HCT116 (cell line): ENCODE measurements at regions of chr1 and their contacts with region 1.

Region 1: DNA sequence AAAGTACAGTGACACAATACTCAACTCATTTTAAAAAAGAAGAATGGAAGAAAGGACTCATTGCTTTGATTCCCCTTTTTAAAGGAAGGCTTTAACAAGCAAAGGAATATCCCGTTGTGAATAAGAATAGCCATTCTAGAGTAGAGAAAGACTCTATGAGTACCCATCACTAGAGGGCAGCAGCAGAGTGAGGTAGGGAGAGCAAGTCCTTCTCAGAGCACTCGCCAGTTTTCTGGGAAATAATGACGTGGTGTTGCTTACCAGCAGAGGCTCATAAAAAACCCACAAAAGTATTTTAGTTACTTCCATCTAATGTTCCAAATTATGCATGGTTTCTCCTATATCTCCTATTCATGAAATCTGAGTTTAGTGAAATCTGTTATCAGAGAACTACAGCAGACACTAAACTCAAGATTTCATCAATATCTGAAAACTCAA is 74.6 kb downstream of the USP24 start:
- DNase-seq: peak; percentile 54
- ATAC-seq: peak; percentile 89
- H3K4me3 ChIP-seq: no peak overlapping the region
- H3K27ac ChIP-seq: no peak overlapping the region
- H3K4me1 ChIP-seq: no peaks in the 10 kb centered on the region
- H3K27me3 ChIP-seq: no peaks in the 10 kb centered on the region
- CTCF ChIP-seq: peak; percentile 74 to 85 (median 81)
- POLR2A ChIP-seq: no peak
- RAD21 ChIP-seq: peak; percentile 81

Region 2: DNA sequence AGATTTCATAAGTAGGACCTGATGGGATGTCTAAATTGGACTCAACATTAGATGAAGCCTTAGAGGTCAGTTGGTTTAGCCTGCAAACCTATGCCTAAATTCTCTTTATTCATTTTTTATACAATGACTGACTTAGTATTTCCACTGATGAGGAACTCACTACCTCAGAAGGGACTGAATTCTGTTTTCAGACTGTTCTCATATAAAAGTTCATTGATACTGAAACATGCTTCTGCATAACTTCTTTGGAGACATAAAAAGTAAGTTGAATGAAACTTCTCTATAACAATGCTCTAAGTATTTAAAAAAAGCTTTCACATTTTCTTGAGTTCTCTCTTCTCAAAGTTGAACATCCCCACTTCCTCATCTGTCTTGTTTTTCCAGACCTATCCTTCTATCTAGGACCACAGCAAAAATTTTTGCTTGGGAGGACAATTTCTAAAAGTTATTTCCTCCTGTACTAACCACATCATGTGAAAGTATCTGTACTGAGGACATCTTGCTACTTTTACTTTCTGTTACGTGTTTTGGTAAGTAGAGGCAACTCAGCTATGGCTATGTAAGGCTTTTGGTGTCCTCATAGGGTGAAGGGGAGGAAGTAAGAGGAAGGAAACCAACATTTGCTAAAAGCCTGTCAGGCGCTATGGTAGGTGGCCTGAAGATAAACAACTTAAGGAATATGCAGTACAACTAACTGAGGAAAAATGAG is 10.5 kb after region 1 on chr1:
- CTCF ChIA-PET with region 1: interaction called, 20 read pairs
- POLR2A ChIA-PET with region 1: no interaction called
- RAD21 ChIA-PET with region 1: no interaction called
- intact Hi-C with region 1: no loop called
- DNase-seq: no peak
- ATAC-seq: no peak
- H3K4me3 ChIP-seq: no peak overlapping the region
- H3K27ac ChIP-seq: no peak overlapping the region
- H3K4me1 ChIP-seq: no peaks in the 10 kb centered on the region
- H3K27me3 ChIP-seq: no peaks in the 10 kb centered on the region
- CTCF ChIP-seq: no peak
- POLR2A ChIP-seq: no peak
- RAD21 ChIP-seq: no peak

Region 3: DNA sequence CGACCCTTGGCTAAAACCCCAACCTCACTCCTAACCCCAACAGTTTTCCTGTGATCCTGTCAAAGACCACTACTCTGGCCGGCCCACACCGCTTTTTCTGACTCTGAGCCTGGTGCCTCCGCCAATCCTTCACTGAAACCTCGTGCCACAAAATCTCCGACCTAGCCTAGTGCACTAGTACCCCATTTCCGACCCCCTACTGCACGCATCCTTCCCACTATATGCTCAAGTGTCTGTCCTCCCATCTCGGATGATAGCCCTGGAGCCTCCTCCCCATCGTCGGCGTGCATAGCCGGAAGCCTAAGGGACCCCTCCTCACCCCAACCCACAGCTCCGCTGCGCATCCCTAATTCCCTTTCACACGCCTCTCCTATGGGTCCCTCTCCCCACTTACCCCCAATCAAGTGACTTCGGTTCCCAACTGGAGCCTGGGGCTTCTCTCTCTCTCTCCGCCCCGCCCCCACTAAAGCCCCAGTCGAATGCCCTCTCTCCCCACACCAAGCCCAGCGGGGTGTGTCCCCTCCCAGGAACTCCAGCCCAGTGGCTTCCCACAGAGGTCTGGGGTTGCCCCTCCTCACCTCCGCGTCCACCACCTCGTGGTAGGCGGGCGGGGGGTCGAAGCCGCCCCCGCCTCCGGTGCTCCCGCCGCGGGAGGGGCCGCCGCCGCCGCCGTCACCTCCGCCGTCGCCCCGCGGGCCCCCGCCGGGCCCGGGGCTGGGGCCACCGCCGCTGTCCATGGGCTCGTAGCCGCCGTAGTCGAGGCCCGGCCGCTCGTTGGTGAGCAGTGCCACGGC is 73.8 kb after region 1 on chr1:
- CTCF ChIA-PET with region 1: no interaction called
- POLR2A ChIA-PET with region 1: no interaction called
- RAD21 ChIA-PET with region 1: no interaction called
- intact Hi-C with region 1: loop called (anchors 5 kb)
- DNase-seq: no peak
- ATAC-seq: peak; percentile 36
- H3K4me3 ChIP-seq: peak overlapping the region; percentile 78 to 82
- H3K27ac ChIP-seq: peak overlapping the region; percentile 90
- H3K4me1 ChIP-seq: peaks cover 13 to 32% of the 10 kb centered on the region in 2 experiments
- H3K27me3 ChIP-seq: no peaks in the 10 kb centered on the region
- CTCF ChIP-seq: no peak
- POLR2A ChIP-seq: no peak
- RAD21 ChIP-seq: no peak

Region 4: DNA sequence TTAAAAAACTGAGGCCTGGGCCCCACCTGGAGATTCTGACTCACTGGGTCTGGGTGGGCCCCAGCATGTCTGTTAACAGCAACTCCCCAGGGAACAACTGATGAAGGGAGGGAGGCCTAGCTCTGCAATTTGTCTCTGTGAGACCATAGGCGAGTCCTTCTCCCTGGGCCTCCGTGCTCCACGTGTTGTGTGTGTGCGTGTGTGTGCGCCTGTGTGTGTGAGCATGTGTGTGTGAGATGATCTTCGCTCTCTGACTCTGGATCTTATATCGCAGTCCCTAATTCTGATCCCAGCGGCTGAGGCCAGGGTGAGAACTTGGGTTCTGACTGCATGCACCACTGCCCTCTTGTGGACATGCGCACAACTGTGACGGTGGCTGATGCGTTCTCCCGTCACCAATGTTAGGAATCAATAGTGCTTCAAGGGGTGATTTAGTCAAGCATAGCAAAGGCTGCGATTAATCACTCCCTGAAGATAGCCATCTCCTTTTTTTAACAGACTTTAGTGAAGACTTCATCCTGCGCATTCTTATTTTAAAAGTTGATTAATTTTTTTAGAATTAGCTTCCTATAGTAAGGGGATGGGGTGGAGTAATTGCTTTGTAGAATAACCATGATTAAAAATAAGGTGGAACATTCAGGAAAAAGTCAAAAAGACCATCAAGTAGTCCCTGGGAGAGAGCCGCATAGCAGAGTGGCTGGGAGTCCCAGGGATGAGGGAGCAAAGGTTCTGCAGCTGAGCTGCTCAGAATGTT is 137.0 kb after region 1 on chr1:
- CTCF ChIA-PET with region 1: interaction called, 42 read pairs
- POLR2A ChIA-PET with region 1: no interaction called
- RAD21 ChIA-PET with region 1: no interaction called
- intact Hi-C with region 1: loop called (anchors 1 kb)
- DNase-seq: peak; percentile 79
- ATAC-seq: peak; percentile 97
- H3K4me3 ChIP-seq: no peak overlapping the region
- H3K27ac ChIP-seq: no peak overlapping the region
- H3K4me1 ChIP-seq: peaks cover 4 to 12% of the 10 kb centered on the region in 2 experiments; a peak in 3 of 4 replicates
- H3K27me3 ChIP-seq: no peaks in the 10 kb centered on the region
- CTCF ChIP-seq: peak; percentile 75 to 82 (median 81)
- POLR2A ChIP-seq: no peak
- RAD21 ChIP-seq: peak; percentile 81

Region 5: GRCh38 chr1:55337801-55338447 is 197.4 kb after region 1 on chr1:
- CTCF ChIA-PET with region 1: interaction called, 8 read pairs
- POLR2A ChIA-PET with region 1: no interaction called
- RAD21 ChIA-PET with region 1: no interaction called
- intact Hi-C with region 1: loop called (anchors 5 kb)
- DNase-seq: peak; percentile 36
- ATAC-seq: peak; percentile 90
- H3K4me3 ChIP-seq: no peak overlapping the region
- H3K27ac ChIP-seq: no peak overlapping the region
- H3K4me1 ChIP-seq: no peaks in the 10 kb centered on the region
- H3K27me3 ChIP-seq: no peaks in the 10 kb centered on the region
- CTCF ChIP-seq: peak; percentile 42 to 58 (median 44); a peak in 4 of 6 replicates
- POLR2A ChIP-seq: no peak
- RAD21 ChIP-seq: peak; percentile 71

Region 6: GRCh38 chr1:56584910-56585528 is 1444.5 kb after region 1 on chr1:
- CTCF ChIA-PET with region 1: interaction called, 5 read pairs
- POLR2A ChIA-PET with region 1: no interaction called
- RAD21 ChIA-PET with region 1: no interaction called
- intact Hi-C with region 1: loop called (anchors 5 kb)
- DNase-seq: peak; percentile 39
- ATAC-seq: peak; percentile 76
- H3K4me3 ChIP-seq: no peak overlapping the region
- H3K27ac ChIP-seq: no peak overlapping the region
- H3K4me1 ChIP-seq: peaks cover 0 to 5% of the 10 kb centered on the region in 2 experiments; a peak in 2 of 4 replicates
- H3K27me3 ChIP-seq: no peaks in the 10 kb centered on the region
- CTCF ChIP-seq: peak; percentile 68 to 90 (median 70); a peak in 5 of 6 replicates
- POLR2A ChIP-seq: no peak
- RAD21 ChIP-seq: peak; percentile 90

Region 7: GRCh38 chr1:56709269-56709880 is 1568.8 kb after region 1 on chr1:
- CTCF ChIA-PET with region 1: no interaction called
- POLR2A ChIA-PET with region 1: no interaction called
- RAD21 ChIA-PET with region 1: no interaction called
- intact Hi-C with region 1: loop called (anchors 10 kb)
- DNase-seq: peak; percentile 45
- ATAC-seq: peak; percentile 88
- H3K4me3 ChIP-seq: no peak overlapping the region
- H3K27ac ChIP-seq: no peak overlapping the region
- H3K4me1 ChIP-seq: peaks cover 0 to 5% of the 10 kb centered on the region in 2 experiments; a peak in 2 of 4 replicates
- H3K27me3 ChIP-seq: peaks cover 33% of the 10 kb centered on the region
- CTCF ChIP-seq: peak; percentile 26 to 59 (median 43); a peak in 4 of 6 replicates
- POLR2A ChIP-seq: no peak
- RAD21 ChIP-seq: peak; percentile 68